GM12878 (cell line): ENCODE measurements at regions of chr15 and their contacts with region 1.

Region 1: DNA sequence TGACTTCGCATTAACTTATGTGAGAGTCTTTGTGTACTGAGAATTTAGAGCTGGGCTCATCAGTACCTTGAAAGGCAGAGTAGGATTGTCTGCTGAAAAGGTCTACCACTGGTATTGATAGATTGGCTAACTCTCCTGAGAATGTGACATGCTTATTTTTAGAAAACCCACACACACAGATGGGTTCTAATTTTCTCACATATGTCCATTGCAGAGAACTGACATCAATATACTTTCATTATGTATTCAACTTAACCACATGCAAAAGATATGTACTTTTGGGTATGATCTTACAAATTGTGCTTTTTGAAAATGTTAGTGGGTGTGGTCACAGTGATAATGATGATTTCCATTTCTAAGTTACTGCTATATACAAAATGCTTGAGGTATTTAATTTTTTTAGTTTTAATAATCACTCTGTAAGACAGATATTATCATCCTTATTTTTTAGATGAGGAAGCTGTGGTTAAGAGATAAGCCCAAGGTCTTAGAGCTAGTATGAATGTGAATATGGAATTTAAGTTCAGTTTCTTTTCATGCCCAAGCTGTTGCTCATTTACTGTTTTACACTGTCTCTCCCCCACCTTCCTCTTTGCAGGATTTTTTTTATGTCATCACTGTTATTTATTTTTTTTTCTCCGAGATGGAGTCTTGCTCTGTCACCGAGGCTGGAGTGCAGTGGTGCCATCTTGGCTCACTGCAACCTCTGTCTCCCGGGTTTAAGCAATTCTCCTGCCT is 22.3 kb downstream of the MAP2K5 start:
- DNase-seq: peak; percentile 80
- ATAC-seq: peak; percentile 95
- H3K4me3 ChIP-seq: peak overlapping the region; percentile 24; the same call in 1 of the 2 replicates
- H3K27ac ChIP-seq: peak overlapping the region; percentile 75
- H3K4me1 ChIP-seq: peaks cover 39% of the 10 kb centered on the region
- H3K27me3 ChIP-seq: no peaks in the 10 kb centered on the region
- CTCF ChIP-seq: no peak
- EP300 ChIP-seq: peak; percentile 46 to 83; a peak in 3 of 4 replicates
- POLR2A ChIP-seq: no peak
- RAD21 ChIP-seq: no peak

Region 2: DNA sequence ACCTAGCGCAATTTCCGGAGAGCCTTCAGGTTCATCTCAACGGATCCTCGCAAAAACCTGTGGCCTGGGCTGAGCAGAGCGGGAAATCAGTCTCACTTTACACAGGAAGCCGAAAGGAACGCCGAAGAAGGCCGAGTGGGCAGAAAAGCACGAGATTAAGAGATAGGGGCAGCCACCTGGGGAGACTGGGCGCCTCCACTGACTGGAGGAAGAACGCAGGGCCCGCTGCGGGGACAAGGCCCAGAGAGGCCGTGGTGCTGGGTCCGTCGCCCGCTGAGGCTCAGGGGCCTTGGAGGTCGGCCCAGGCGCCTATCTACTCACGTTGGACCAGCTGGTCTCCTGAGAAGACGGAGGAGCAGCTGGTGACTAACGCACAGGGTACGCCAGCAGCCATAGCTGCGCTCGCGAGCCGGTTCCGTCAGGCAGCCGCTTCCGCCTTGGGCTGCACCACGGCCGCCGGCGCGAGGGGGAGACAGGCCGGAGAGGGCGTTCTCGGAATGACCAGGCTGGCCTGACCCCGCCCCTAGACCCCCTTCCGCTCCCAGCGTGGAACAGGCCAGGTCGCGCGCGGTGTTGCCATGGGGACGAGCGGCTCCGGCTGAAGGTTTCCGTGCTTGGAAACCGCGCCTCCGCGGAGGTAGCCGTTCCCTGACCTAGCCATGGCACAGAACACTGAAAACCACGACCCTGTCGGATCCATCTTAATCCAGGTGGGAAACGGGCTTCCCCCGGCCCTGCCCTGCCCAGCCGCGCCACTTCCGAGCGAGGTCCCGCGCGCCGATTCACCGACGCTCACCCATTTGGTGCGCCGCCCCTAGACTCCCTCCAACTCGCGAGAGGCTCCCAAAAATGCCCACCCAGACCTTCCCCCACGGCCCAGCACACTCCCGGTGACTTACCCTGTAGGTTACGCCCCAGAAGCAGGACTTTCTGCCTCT is 310.3 kb before region 1 on chr15 and contains the starts of genes AAGAB and IQCH:
- CTCF ChIA-PET with region 1: no interaction called
- POLR2A ChIA-PET with region 1: no interaction called
- RAD21 ChIA-PET with region 1: no interaction called
- SMC1A ChIA-PET with region 1: no interaction called
- in situ Hi-C with region 1: no loop called
- intact Hi-C with region 1: loop called (anchors 5 kb)
- DNase-seq: peak; percentile 90
- ATAC-seq: peak; percentile 97
- H3K4me3 ChIP-seq: peak within 1 kb of the TSS; percentile 84
- H3K27ac ChIP-seq: peak within 1 kb of the TSS; percentile 78
- H3K4me1 ChIP-seq: no peaks in the 10 kb centered on the region
- H3K27me3 ChIP-seq: no peaks in the 10 kb centered on the region
- CTCF ChIP-seq: no peak
- EP300 ChIP-seq: no peak
- POLR2A ChIP-seq: peak; percentile 99
- RAD21 ChIP-seq: no peak
- polyA plus RNA-seq, gene AAGAB: 11.4 to 32.4 TPM
- polyA plus RNA-seq, gene IQCH: 0.58 to 1.3 TPM

Region 3: DNA sequence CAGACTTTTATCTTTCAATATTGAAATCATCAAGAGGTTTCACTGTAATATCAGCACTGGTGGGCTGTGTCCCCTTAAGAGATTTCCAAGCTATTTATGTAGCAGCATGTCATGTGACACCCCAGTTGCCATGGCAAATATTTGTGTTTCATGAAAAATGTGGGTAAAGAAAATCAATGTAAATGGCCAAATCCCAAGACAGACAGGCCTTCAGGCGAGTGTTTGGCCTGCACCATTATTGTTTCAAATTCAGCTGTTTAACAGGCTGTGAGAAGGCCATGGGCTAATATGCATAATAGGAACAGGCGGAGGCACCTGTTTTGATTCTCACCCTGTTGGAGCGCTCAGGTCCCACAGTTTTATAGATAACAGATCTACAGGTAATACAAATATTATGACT is 206.0 kb before region 1 on chr15:
- CTCF ChIA-PET with region 1: no interaction called
- POLR2A ChIA-PET with region 1: no interaction called
- RAD21 ChIA-PET with region 1: no interaction called
- SMC1A ChIA-PET with region 1: no interaction called
- in situ Hi-C with region 1: no loop called
- intact Hi-C with region 1: no loop called
- DNase-seq: no peak
- ATAC-seq: no peak
- H3K4me3 ChIP-seq: no peak overlapping the region
- H3K27ac ChIP-seq: no peak overlapping the region
- H3K4me1 ChIP-seq: no peaks in the 10 kb centered on the region
- H3K27me3 ChIP-seq: no peaks in the 10 kb centered on the region
- CTCF ChIP-seq: no peak
- EP300 ChIP-seq: no peak
- POLR2A ChIP-seq: no peak
- RAD21 ChIP-seq: no peak

Region 4: DNA sequence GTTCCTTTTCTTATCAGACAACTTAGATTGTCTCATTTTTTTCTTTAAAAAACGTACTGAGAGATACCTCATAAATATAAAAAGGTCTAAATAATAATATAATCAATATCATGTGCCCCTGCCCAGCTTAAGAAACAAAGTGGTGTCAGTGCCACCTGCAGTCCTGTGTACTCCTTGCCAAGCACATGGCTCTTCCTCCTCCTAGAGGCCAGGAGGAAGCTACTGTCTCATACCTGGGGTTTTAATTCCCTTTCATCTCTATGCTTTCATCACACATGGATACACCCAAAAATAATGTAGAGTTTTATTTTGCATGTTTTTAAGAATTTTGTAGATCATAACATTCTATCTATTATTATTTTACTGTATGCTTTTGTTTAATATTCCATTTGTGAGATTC is 142.5 kb before region 1 on chr15:
- CTCF ChIA-PET with region 1: no interaction called
- POLR2A ChIA-PET with region 1: no interaction called
- RAD21 ChIA-PET with region 1: no interaction called
- SMC1A ChIA-PET with region 1: no interaction called
- in situ Hi-C with region 1: no loop called
- intact Hi-C with region 1: no loop called
- DNase-seq: no peak
- ATAC-seq: no peak
- H3K4me3 ChIP-seq: no peak overlapping the region
- H3K27ac ChIP-seq: no peak overlapping the region
- H3K4me1 ChIP-seq: no peaks in the 10 kb centered on the region
- H3K27me3 ChIP-seq: no peaks in the 10 kb centered on the region
- CTCF ChIP-seq: peak in 2 of 3 experiments; percentile 7 to 15; a peak in 1 of 6 replicates
- EP300 ChIP-seq: no peak
- POLR2A ChIP-seq: no peak
- RAD21 ChIP-seq: 0 out of 2 replicates have a peak, but pooled peaks have one; percentile 2

Region 5: GRCh38 chr15:67548862-67549651 is 15.7 kb before region 1 on chr15:
- CTCF ChIA-PET with region 1: interaction called, 5 read pairs
- POLR2A ChIA-PET with region 1: interaction called, 7 read pairs
- RAD21 ChIA-PET with region 1: interaction called, 3 read pairs
- SMC1A ChIA-PET with region 1: interaction called, 19 read pairs
- in situ Hi-C with region 1: no loop called
- intact Hi-C with region 1: no loop called
- DNase-seq: no peak
- ATAC-seq: peak; percentile 52
- H3K4me3 ChIP-seq: no peak overlapping the region
- H3K27ac ChIP-seq: no peak overlapping the region
- H3K4me1 ChIP-seq: peaks cover 5% of the 10 kb centered on the region
- H3K27me3 ChIP-seq: no peaks in the 10 kb centered on the region
- CTCF ChIP-seq: no peak
- EP300 ChIP-seq: no peak
- POLR2A ChIP-seq: no peak
- RAD21 ChIP-seq: no peak